ENCODE measurements at regions of chr1 and their contacts with region 1.

Region 1: DNA sequence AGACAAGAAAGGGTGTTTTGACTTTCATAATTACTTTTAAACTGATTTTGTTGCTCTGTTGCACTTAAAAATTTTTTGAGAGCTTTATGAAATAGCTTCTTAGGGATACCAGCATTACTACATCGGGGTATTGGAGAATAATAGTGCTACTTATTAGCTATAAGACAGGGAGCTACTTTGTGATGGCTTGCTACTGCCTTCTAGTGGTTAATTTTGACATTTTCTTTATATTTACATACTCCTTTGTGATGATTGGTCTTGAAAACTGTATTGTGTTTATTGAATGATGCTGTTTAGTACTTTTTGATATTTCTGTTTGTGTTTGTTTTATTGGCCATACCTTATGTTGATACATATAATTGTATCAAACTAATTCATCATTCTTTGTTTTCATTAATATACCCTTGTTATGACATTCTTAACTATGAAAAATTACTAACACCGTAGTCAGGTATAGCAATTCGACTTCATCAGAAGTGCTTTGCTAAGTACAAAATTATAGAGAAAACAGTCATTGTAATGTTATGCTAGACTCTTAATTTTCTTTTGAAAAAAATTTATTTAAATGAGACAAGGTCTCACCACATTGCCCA is 85.5 kb downstream of the CLIC4 start:
- DNase-seq: peak; percentile 53
- H3K4me3 ChIP-seq: peak overlapping the region in 1 of 2 experiments; percentile 18; a peak in 1 of 4 replicates
- H3K27ac ChIP-seq: peak overlapping the region in 1 of 2 experiments; percentile 28; a peak in 1 of 4 replicates
- H3K4me1 ChIP-seq: peaks cover 28 to 37% of the 10 kb centered on the region in 2 experiments
- H3K27me3 ChIP-seq: no peaks in the 10 kb centered on the region
- CTCF ChIP-seq: peak; percentile 94
- EP300 ChIP-seq: no peak
- RAD21 ChIP-seq: peak; percentile 94

Region 2: GRCh38 chr1:24137031-24137430 is 693.7 kb before region 1 on chr1:
- CTCF ChIA-PET with region 1: no interaction called
- POLR2A ChIA-PET with region 1: no interaction called
- DNase-seq: no peak
- H3K4me3 ChIP-seq: no peak overlapping the region
- H3K27ac ChIP-seq: no peak overlapping the region
- H3K4me1 ChIP-seq: no peaks in the 10 kb centered on the region
- H3K27me3 ChIP-seq: no peaks in the 10 kb centered on the region; the same call in 1 of the 2 replicates
- CTCF ChIP-seq: no peak
- EP300 ChIP-seq: no peak
- RAD21 ChIP-seq: no peak

Region 3: DNA sequence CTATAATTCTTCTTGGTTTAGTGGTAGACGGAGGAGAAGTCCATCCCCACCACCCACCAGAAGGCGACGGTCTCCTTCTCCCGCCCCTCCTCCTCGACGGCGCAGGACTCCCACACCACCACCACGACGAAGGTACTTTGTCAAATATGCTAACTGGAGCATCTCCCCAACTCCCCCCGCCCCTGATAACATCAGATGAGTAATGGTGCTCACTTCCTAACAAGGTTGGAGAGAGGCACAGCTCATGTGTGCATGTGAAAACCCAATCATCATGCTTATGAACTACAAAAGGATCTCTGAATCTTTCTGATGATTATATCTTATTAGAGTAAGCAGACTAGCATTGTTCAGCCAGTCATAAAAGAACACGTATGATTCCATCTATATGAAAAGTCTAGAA is 164.0 kb before region 1 on chr1:
- CTCF ChIA-PET with region 1: interaction called, 10 read pairs
- POLR2A ChIA-PET with region 1: no interaction called
- DNase-seq: no peak
- H3K4me3 ChIP-seq: no peak overlapping the region
- H3K27ac ChIP-seq: peak overlapping the region in 1 of 2 experiments; percentile 12; a peak in 2 of 4 replicates
- H3K4me1 ChIP-seq: no peaks in the 10 kb centered on the region
- H3K27me3 ChIP-seq: no peaks in the 10 kb centered on the region
- CTCF ChIP-seq: no peak
- EP300 ChIP-seq: no peak
- RAD21 ChIP-seq: no peak

Region 4: GRCh38 chr1:24688621-24689195 is 142.1 kb before region 1 on chr1:
- CTCF ChIA-PET with region 1: interaction called, 206 read pairs
- POLR2A ChIA-PET with region 1: interaction called, 4 read pairs
- DNase-seq: peak; percentile 77
- H3K4me3 ChIP-seq: no peak overlapping the region; a peak in 1 of 4 replicates
- H3K27ac ChIP-seq: no peak overlapping the region
- H3K4me1 ChIP-seq: peaks cover 0 to 6% of the 10 kb centered on the region in 2 experiments; a peak in 1 of 4 replicates
- H3K27me3 ChIP-seq: no peaks in the 10 kb centered on the region
- CTCF ChIP-seq: peak; percentile 88
- EP300 ChIP-seq: no peak
- RAD21 ChIP-seq: peak; percentile 94

Region 5: DNA sequence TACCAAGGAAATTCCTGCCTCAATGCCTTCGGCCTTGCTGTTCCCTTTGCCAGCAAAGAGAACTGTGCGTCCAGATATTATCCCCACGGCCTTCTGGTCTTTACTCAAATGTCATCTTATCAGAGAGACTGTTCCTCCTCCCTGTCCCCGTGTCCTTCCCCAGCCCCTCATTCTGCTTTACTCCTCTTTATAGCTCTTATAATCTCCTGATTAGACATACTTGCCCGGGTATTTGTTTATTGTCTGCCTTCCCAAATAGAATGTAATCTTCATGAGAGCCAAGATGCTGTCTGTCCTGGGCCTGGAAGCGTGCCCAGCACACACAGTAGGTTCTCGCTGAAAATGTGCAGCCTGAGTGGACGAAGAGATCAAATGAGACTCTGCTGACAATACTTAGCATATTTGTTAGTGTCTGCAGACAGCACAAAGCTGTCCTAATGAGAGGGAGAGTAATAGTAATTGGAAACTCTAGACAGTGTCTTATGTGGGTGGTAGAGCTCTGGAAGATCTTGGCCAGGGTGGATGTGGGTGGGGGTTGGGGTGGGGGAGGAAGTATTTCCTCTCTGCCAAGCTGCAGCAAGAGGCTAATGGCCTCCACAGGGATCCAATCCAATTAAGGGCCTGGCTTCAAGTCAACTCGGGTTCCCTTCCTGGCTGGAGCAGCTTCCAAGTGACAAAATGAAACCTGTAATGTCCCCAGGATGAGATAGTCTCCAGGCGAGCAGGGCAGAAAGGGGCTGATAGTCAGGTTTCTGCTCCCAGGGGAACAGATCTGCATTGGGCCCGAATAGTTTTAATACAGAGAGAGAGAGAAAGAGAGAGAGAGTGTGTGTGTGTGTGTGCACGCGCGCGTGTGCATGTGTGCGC is 95.0 kb before region 1 on chr1:
- CTCF ChIA-PET with region 1: interaction called, 12 read pairs
- POLR2A ChIA-PET with region 1: no interaction called
- DNase-seq: peak; percentile 55
- H3K4me3 ChIP-seq: no peak overlapping the region
- H3K27ac ChIP-seq: peak overlapping the region; percentile 44 to 81; a peak in 3 of 4 replicates
- H3K4me1 ChIP-seq: peaks cover 5 to 20% of the 10 kb centered on the region in 2 experiments; a peak in 3 of 4 replicates
- H3K27me3 ChIP-seq: no peaks in the 10 kb centered on the region
- CTCF ChIP-seq: no peak
- EP300 ChIP-seq: no peak
- RAD21 ChIP-seq: no peak

Region 6: DNA sequence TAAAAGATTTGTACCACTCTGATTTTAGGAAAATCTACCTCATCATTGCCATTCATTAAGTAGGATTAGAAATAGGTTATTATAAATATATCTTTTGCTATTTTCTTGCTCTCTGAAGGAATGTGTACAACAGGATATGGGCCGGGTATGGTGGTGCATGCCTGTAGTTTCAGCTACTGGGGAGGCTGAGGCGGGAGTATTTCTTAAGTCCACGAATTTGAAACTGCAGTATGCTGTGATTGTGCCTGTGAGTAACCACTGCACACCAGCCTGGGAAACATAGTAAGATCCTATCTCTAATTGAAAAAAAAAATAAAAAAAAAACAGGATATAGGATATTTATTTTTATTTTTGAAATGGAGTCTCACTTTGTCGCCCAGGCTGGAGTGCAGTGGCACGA is 35.5 kb before region 1 on chr1:
- CTCF ChIA-PET with region 1: no interaction called
- POLR2A ChIA-PET with region 1: no interaction called
- DNase-seq: no peak
- H3K4me3 ChIP-seq: no peak overlapping the region
- H3K27ac ChIP-seq: peak overlapping the region in 1 of 2 experiments; percentile 78; a peak in 1 of 4 replicates
- H3K4me1 ChIP-seq: peaks cover 0 to 24% of the 10 kb centered on the region in 2 experiments; a peak in 2 of 4 replicates
- H3K27me3 ChIP-seq: no peaks in the 10 kb centered on the region
- CTCF ChIP-seq: no peak
- EP300 ChIP-seq: no peak
- RAD21 ChIP-seq: no peak

Region 7: GRCh38 chr1:24841593-24841992 is 10.8 kb after region 1 on chr1:
- CTCF ChIA-PET with region 1: interaction called, 23 read pairs
- POLR2A ChIA-PET with region 1: no interaction called
- DNase-seq: no peak
- H3K4me3 ChIP-seq: no peak overlapping the region
- H3K27ac ChIP-seq: no peak overlapping the region
- H3K4me1 ChIP-seq: no peaks in the 10 kb centered on the region
- H3K27me3 ChIP-seq: no peaks in the 10 kb centered on the region
- CTCF ChIP-seq: no peak
- EP300 ChIP-seq: no peak
- RAD21 ChIP-seq: no peak

Measured in SK-N-SH (cell line).